Stomach (tissue), 19 donors: ENCODE measurements at regions of chr6 and their contacts with region 1.

Region 1: GRCh38 chr6:52399511-52400312 is 20.4 kb upstream of the EFHC1 start:
- DNase-seq: peak in 1 of 2 donors; percentile 83
- H3K4me3 ChIP-seq: no peak overlapping the region
- H3K27ac ChIP-seq: no peak overlapping the region
- H3K4me1 ChIP-seq: peaks cover 3 to 51% (median 14%) of the 10 kb centered on the region in 4 donors
- H3K27me3 ChIP-seq: no peaks in the 10 kb centered on the region
- CTCF ChIP-seq: peak in 6 of 7 experiments; percentile 21 to 92 (median 80)
- EP300 ChIP-seq: no peak
- POLR2A ChIP-seq: no peak

Region 2: GRCh38 chr6:51928320-51928719 is 471.4 kb before region 1 on chr6:
- intact Hi-C with region 1: no loop called
- DNase-seq: no peak
- H3K4me3 ChIP-seq: no peak overlapping the region
- H3K27ac ChIP-seq: no peak overlapping the region
- H3K4me1 ChIP-seq: no peaks in the 10 kb centered on the region
- H3K27me3 ChIP-seq: no peaks in the 10 kb centered on the region
- CTCF ChIP-seq: no peak
- EP300 ChIP-seq: no peak
- POLR2A ChIP-seq: no peak

Region 3: DNA sequence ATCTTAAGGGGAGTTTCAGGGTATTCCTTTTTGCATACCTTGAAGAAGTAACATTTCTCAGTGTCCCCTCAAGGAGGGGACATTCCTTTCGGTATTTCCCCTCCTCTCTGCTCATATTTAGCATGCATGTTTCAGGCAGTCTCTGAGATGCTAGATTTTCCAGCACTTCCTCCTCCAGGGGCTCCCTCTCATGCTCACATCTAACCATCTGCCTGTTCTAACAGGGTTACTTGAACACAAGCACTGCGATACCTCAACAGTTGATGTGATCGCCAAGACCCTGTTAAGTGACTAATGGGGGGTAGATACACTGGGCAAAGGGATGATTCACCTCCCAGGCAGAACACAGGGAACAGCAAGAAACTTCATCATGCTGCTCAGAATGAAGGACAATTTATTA is 102.3 kb before region 1 on chr6:
- intact Hi-C with region 1: loop called (anchors 5 kb)
- DNase-seq: no peak
- H3K4me3 ChIP-seq: no peak overlapping the region
- H3K27ac ChIP-seq: no peak overlapping the region
- H3K4me1 ChIP-seq: peaks cover 0 to 9% (median 0%) of the 10 kb centered on the region in 4 donors
- H3K27me3 ChIP-seq: no peaks in the 10 kb centered on the region
- CTCF ChIP-seq: no peak
- EP300 ChIP-seq: no peak
- POLR2A ChIP-seq: no peak

Region 4: DNA sequence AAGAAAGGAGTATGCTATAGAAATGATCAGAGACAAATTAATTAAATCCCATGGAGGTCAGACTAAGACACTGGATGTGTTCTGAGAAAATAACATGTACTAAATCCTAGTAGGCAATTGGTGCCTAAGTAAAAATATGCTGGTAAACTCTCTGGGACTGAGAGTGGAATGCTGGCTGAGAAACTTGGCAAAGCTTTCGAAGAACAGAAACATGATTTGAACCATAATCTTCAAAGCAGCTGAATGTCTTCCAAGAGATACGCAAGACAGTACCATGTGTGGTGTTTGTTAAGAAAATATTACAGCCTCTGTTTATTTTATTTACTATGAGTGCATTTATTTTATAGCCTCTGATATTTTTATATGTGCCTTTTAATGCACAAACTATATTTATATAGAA is 75.6 kb after region 1 on chr6:
- intact Hi-C with region 1: no loop called
- DNase-seq: no peak
- H3K4me3 ChIP-seq: no peak overlapping the region
- H3K27ac ChIP-seq: no peak overlapping the region
- H3K4me1 ChIP-seq: no peaks in the 10 kb centered on the region
- H3K27me3 ChIP-seq: no peaks in the 10 kb centered on the region
- CTCF ChIP-seq: no peak
- EP300 ChIP-seq: no peak
- POLR2A ChIP-seq: no peak